Activated CD4-positive, alpha-beta memory T cell treated with anti-CD3 and anti-CD28 coated beads, Interleukin-2, amount 10 ng/mL, durations not matched to agents 7 days and 5 days (primary cell): ENCODE measurements at regions of chr12 and their contacts with region 1.

Region 1: GRCh38 chr12:32312049-32312670 is 87.2 kb upstream of the FGD4 start:
- DNase-seq: no peak
- H3K4me3 Mint-ChIP-seq: no peak overlapping the region
- H3K27ac Mint-ChIP-seq: no peak overlapping the region
- H3K4me1 Mint-ChIP-seq: peaks cover 5% of the 10 kb centered on the region
- H3K27me3 Mint-ChIP-seq: no peaks in the 10 kb centered on the region

Region 2: DNA sequence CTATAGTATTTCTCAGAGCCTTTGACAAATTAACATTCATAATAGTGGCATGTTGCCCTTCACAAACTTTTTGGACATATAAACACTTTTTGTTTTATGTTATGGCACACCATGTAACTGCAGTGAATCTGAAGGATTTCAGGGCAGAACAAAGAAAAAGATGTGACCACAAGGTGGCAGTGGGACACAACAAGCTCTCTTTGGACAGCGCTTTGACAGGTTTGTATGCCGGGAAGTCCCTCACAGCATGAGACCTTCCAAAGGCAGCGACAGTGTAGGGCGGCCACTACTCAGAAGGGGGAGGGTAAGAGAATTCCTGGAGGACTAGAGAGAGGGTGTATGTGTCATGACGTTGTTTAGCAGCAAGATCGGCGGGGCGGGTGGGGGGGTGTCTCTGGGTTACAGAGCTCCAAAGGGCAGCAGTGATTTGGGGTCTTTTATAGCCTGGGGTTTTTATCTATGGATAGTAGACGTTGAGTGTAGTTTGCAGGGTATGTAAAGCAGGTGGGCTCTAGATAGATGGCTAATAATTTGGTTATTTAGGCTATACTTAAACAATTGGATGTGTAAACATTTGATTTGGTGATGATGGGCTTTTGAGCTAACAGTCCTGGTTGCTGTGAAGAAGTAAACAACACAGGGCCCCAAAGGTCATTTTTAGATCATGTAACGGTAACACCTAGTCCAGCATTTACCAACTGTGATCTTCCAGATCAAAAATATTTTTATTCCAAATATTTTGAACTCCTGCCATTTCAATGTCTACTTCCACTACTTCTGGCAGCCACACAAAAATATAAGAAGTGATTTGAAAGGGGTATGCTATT is 629.8 kb before region 1 on chr12:
- CTCF ChIA-PET with region 1: interaction called, 12 read pairs
- POLR2A ChIA-PET with region 1: no interaction called
- DNase-seq: peak; percentile 74
- H3K4me3 Mint-ChIP-seq: no peak overlapping the region
- H3K27ac Mint-ChIP-seq: no peak overlapping the region
- H3K4me1 Mint-ChIP-seq: peaks cover 14% of the 10 kb centered on the region
- H3K27me3 Mint-ChIP-seq: no peaks in the 10 kb centered on the region

Region 3: DNA sequence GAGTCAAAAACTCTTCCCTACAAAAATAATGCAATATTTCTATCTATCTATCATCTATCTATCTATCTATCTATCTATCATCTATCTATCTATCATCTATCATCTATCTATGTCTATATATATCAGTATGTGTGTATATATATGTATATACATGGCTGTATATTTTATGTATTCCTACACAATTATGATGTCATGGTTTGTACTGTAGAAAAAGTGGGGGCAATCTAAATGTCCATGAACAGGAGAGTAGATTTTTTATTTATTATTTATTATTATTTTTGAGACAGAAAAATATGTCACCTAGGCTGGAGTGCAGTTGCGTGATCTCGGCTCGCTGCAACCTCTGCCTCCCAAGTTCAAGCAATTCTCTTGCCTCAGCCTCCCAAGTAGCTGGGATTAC is 251.1 kb before region 1 on chr12:
- CTCF ChIA-PET with region 1: interaction called, 11 read pairs
- POLR2A ChIA-PET with region 1: no interaction called
- DNase-seq: no peak
- H3K4me3 Mint-ChIP-seq: no peak overlapping the region
- H3K27ac Mint-ChIP-seq: no peak overlapping the region
- H3K4me1 Mint-ChIP-seq: peaks cover 4% of the 10 kb centered on the region
- H3K27me3 Mint-ChIP-seq: no peaks in the 10 kb centered on the region

Region 4: DNA sequence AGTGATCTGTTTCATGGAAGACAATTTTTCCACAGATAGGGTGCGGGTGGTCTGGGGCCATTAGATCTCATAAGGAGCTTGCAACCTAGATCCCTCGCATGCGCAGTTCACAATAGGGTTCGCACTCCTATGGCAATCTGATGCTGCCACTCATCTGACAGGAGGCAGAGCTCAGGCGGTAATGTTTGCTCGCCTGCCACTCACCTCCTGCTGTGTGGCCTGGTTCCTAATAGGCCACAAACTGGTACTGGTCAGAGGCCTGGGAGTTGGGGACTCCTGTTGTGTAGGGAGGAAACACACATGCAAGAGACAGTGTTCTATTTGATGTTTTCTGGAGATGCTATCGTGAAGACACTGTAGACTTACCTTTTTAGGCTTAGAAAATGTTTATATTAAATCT is 10.2 kb after region 1 on chr12:
- CTCF ChIA-PET with region 1: interaction called, 11 read pairs
- POLR2A ChIA-PET with region 1: interaction called, 3 read pairs
- DNase-seq: no peak
- H3K4me3 Mint-ChIP-seq: no peak overlapping the region
- H3K27ac Mint-ChIP-seq: no peak overlapping the region
- H3K4me1 Mint-ChIP-seq: no peaks in the 10 kb centered on the region
- H3K27me3 Mint-ChIP-seq: no peaks in the 10 kb centered on the region

Region 5: DNA sequence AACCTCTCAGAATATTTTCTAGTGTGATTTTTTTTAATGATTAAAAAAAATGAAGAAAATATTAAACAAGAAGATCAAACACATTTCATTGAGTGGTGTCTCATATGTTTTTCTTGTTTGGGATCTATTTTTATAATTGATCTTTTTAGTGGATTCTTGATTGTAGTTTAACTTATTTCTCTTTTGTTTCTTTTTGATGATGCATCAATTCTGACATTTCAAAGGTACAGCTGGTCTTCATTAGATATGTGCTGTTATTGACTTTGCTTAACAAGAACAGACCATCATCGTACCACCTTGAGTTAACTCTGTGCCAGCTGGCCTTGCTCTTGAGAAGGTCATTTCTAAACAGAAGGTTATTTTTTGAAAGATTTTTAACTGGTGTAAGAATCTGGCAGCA is 41.4 kb after region 1 on chr12:
- CTCF ChIA-PET with region 1: no interaction called
- POLR2A ChIA-PET with region 1: no interaction called
- DNase-seq: no peak
- H3K4me3 Mint-ChIP-seq: no peak overlapping the region
- H3K27ac Mint-ChIP-seq: no peak overlapping the region
- H3K4me1 Mint-ChIP-seq: no peaks in the 10 kb centered on the region
- H3K27me3 Mint-ChIP-seq: no peaks in the 10 kb centered on the region